ENCODE measurements at regions of chr2 and their contacts with region 1.

Region 1: GRCh38 chr2:50492477-50492851 is 539.5 kb downstream of the NRXN1 start:
- DNase-seq: no peak
- ATAC-seq: peak; percentile 58 to 68
- H3K4me3 ChIP-seq: peak overlapping the region in 1 of 4 donors; percentile 26
- H3K27ac ChIP-seq: no peak overlapping the region
- H3K4me1 ChIP-seq: peaks cover 0 to 6% of the 10 kb centered on the region in 2 donors
- H3K27me3 ChIP-seq: no peaks in the 10 kb centered on the region
- CTCF ChIP-seq: peak in 4 of 5 experiments; percentile 34 to 61 (median 51)
- POLR2A ChIP-seq: no peak

Region 2: GRCh38 chr2:48946449-48947048 is 1545.9 kb before region 1 on chr2:
- in situ Hi-C with region 1: loop called in 1 of 4 experiments (anchors 10 kb)
- intact Hi-C with region 1: no loop called
- DNase-seq: peak in 1 of 2 donors; percentile 10
- ATAC-seq: peak in 1 of 2 donors; percentile 77
- H3K4me3 ChIP-seq: no peak overlapping the region
- H3K27ac ChIP-seq: no peak overlapping the region
- H3K4me1 ChIP-seq: no peaks in the 10 kb centered on the region
- H3K27me3 ChIP-seq: no peaks in the 10 kb centered on the region
- CTCF ChIP-seq: peak; percentile 65 to 82 (median 72)
- POLR2A ChIP-seq: no peak

Region 3: DNA sequence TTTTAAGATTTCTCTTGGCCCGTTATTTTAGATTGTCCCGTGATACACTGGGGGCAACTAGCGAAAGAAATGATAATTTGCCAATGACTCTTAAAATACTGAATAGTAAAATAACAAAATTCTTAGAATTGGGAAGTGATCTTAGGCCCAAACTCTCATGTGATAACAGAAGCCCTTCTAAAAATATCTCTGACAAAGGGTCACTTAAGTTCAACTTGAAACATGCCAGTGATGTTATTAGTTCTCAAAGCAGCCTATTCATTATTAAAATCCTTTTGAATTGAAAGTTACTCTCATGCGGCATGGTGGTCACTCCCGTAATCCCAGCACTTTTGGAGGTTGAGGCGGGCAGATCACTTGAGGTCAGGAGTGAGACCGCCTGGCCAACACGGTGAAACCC is 381.4 kb before region 1 on chr2:
- in situ Hi-C with region 1: no loop called
- intact Hi-C with region 1: no loop called
- DNase-seq: no peak
- ATAC-seq: no peak
- H3K4me3 ChIP-seq: no peak overlapping the region
- H3K27ac ChIP-seq: no peak overlapping the region
- H3K4me1 ChIP-seq: no peaks in the 10 kb centered on the region
- H3K27me3 ChIP-seq: no peaks in the 10 kb centered on the region
- CTCF ChIP-seq: no peak
- POLR2A ChIP-seq: no peak

Region 4: DNA sequence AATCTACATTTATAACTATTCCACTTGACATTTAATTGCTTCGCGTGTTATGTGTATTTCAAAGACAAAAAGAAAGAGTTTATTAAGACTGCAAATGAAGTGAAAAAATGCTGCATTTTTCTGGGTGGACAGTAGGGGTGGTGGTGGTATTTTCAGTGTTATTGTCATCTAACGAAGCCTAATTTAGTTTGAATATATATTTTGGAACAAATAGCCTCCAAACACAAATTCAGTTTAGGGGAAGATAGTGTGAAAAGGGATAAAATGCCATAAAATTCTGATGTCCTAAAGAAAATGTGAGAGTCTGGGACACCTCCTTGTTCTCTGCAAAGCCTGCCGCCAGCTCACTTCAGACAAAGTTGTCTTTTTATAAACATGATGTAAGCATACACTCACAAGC is 114.4 kb after region 1 on chr2:
- in situ Hi-C with region 1: no loop called
- intact Hi-C with region 1: no loop called
- DNase-seq: no peak
- ATAC-seq: no peak
- H3K4me3 ChIP-seq: no peak overlapping the region
- H3K27ac ChIP-seq: no peak overlapping the region
- H3K4me1 ChIP-seq: no peaks in the 10 kb centered on the region
- H3K27me3 ChIP-seq: no peaks in the 10 kb centered on the region
- CTCF ChIP-seq: no peak
- POLR2A ChIP-seq: no peak

Measured in gastrocnemius medialis (tissue), 4 donors.